MCF 10A (cell line): ENCODE measurements at regions of chr7 and their contacts with region 1.

Region 1: GRCh38 chr7:55280031-55280454 is 85.1 kb upstream of the LANCL2 start:
- DNase-seq: peak; percentile 74
- H3K4me3 Mint-ChIP-seq: no peak overlapping the region
- H3K27ac Mint-ChIP-seq: no peak overlapping the region
- H3K4me1 Mint-ChIP-seq: no peaks in the 10 kb centered on the region
- H3K27me3 Mint-ChIP-seq: peaks cover 12% of the 10 kb centered on the region
- CTCF ChIP-seq: peak; percentile 70

Region 2: GRCh38 chr7:55237156-55237893 is 42.7 kb before region 1 on chr7:
- CTCF ChIA-PET with region 1: no interaction called
- POLR2A ChIA-PET with region 1: no interaction called
- intact Hi-C with region 1: no loop called
- DNase-seq: no peak
- H3K4me3 Mint-ChIP-seq: no peak overlapping the region
- H3K27ac Mint-ChIP-seq: no peak overlapping the region
- H3K4me1 Mint-ChIP-seq: no peaks in the 10 kb centered on the region
- H3K27me3 Mint-ChIP-seq: peaks cover 52% of the 10 kb centered on the region
- CTCF ChIP-seq: no peak

Region 3: DNA sequence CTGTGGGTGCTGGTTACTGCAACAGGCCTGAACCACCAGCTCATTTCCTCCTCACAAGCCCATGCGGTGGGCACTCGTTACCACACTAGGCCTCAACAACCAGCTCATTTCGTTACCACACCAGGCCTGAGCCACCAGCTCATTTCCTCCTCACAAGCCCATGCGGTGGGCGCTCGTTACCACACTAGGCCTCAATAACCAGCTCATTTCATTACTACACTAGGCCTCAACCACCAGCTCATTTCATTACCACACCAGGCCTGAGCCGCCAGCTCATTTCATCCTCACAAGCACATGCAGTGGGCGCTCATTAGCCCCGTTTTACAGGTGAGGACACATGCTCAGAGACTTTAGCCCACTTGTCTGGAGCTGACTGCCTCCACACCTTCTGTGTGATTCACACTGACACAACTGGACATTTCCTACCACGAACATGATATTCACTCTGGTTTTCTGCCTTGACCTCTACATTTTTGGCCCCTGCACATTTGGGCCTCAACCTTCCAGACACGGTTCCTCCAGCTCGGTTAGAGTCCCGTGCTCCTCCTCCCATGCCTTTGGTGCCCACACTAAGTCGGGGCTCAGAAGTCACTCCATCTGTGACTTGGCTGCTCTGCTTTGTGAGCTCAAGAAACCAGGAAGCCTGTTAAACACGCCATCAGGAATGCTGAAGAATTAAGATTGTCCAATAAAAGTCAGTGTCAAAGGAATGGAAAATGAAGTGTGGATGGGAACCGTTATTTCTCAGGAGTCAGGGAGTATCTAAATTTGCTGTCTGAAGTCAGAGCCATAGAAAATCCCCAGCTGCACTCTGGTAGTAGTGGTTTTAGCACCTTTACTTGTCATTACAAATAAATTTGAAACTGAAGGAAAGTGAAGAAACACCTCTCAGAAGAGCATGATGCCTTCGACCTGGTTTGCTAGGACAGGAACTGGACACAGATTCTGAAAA is 29.3 kb after region 1 on chr7:
- CTCF ChIA-PET with region 1: interaction called, 11 read pairs
- POLR2A ChIA-PET with region 1: interaction called, 6 read pairs
- intact Hi-C with region 1: no loop called
- DNase-seq: no peak
- H3K4me3 Mint-ChIP-seq: no peak overlapping the region
- H3K27ac Mint-ChIP-seq: no peak overlapping the region
- H3K4me1 Mint-ChIP-seq: peaks cover 19% of the 10 kb centered on the region
- H3K27me3 Mint-ChIP-seq: peaks cover 9% of the 10 kb centered on the region
- CTCF ChIP-seq: no peak

Region 4: DNA sequence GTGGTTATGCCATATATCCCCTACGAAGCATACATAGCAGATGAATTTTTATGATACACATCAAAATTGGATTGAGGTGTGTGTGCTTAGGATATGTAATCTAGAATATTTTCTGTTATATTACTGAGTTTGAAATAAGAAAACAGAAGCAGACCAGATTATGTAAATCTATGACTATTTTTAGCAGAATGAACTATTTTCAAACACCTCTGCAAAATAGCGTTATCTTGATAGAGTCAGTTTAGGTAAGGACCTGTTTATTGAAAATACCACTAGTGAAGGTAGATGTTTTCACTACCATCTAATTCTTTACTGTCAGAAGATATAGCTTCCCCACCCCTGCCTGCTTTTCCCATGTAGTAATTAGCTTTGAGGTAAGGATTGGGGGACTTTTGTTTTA is 94.2 kb after region 1 on chr7:
- CTCF ChIA-PET with region 1: interaction called, 22 read pairs
- POLR2A ChIA-PET with region 1: no interaction called
- intact Hi-C with region 1: no loop called
- DNase-seq: no peak
- H3K4me3 Mint-ChIP-seq: no peak overlapping the region
- H3K27ac Mint-ChIP-seq: no peak overlapping the region
- H3K4me1 Mint-ChIP-seq: no peaks in the 10 kb centered on the region
- H3K27me3 Mint-ChIP-seq: no peaks in the 10 kb centered on the region
- CTCF ChIP-seq: no peak

Region 5: GRCh38 chr7:55409482-55410225 is 129.6 kb after region 1 on chr7:
- CTCF ChIA-PET with region 1: interaction called, 304 read pairs
- POLR2A ChIA-PET with region 1: interaction called, 7 read pairs
- intact Hi-C with region 1: no loop called
- DNase-seq: no peak
- H3K4me3 Mint-ChIP-seq: no peak overlapping the region
- H3K27ac Mint-ChIP-seq: no peak overlapping the region
- H3K4me1 Mint-ChIP-seq: no peaks in the 10 kb centered on the region
- H3K27me3 Mint-ChIP-seq: no peaks in the 10 kb centered on the region
- CTCF ChIP-seq: no peak

Region 6: GRCh38 chr7:55415173-55415778 is 135.2 kb after region 1 on chr7:
- CTCF ChIA-PET with region 1: interaction called, 304 read pairs
- POLR2A ChIA-PET with region 1: interaction called, 7 read pairs
- intact Hi-C with region 1: loop called (anchors 1 kb)
- DNase-seq: peak; percentile 81
- H3K4me3 Mint-ChIP-seq: no peak overlapping the region
- H3K27ac Mint-ChIP-seq: no peak overlapping the region
- H3K4me1 Mint-ChIP-seq: no peaks in the 10 kb centered on the region
- H3K27me3 Mint-ChIP-seq: no peaks in the 10 kb centered on the region
- CTCF ChIP-seq: peak; percentile 77

Region 7: GRCh38 chr7:55423277-55423711 is 143.3 kb after region 1 on chr7:
- CTCF ChIA-PET with region 1: interaction called, 304 read pairs
- POLR2A ChIA-PET with region 1: interaction called, 4 read pairs
- intact Hi-C with region 1: no loop called
- DNase-seq: no peak
- H3K4me3 Mint-ChIP-seq: no peak overlapping the region
- H3K27ac Mint-ChIP-seq: no peak overlapping the region
- H3K4me1 Mint-ChIP-seq: no peaks in the 10 kb centered on the region
- H3K27me3 Mint-ChIP-seq: no peaks in the 10 kb centered on the region
- CTCF ChIP-seq: no peak

Region 8: GRCh38 chr7:55593515-55594318 is 313.7 kb after region 1 on chr7:
- CTCF ChIA-PET with region 1: interaction called, 6 read pairs
- POLR2A ChIA-PET with region 1: no interaction called
- intact Hi-C with region 1: loop called (anchors 5 kb)
- DNase-seq: peak; percentile 75
- H3K4me3 Mint-ChIP-seq: no peak overlapping the region
- H3K27ac Mint-ChIP-seq: no peak overlapping the region
- H3K4me1 Mint-ChIP-seq: peaks cover 6% of the 10 kb centered on the region
- H3K27me3 Mint-ChIP-seq: peaks cover 10% of the 10 kb centered on the region
- CTCF ChIP-seq: peak; percentile 85